Ascending aorta (tissue), 2 donors: ENCODE measurements at regions of chr4 and their contacts with region 1.

Region 1: GRCh38 chr4:161680146-161680545 is 483.7 kb downstream of the FSTL5 start:
- DNase-seq: no peak
- H3K4me3 ChIP-seq: no peak overlapping the region
- H3K27ac ChIP-seq: no peak overlapping the region
- H3K4me1 ChIP-seq: no peaks in the 10 kb centered on the region
- H3K27me3 ChIP-seq: no peaks in the 10 kb centered on the region
- CTCF ChIP-seq: no peak

Region 2: DNA sequence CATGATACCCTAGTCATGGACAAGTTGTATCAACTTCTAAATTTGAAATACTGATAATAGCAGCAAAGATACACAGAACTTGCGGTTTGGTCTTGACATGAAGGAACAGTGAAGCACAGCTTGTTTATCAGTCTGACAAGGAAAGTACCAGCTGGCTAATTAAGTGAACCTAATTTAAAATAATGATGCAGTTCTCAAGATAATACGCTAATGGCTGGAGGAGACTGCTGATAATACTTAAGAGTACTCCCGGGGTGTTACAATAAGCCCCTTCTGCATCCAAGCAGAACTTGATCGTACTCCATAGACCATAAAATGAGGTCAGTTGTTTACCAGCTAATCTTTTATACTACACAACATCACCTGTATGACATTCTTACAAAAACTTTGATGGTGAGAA is 213.8 kb before region 1 on chr4:
- intact Hi-C with region 1: no loop called
- DNase-seq: no peak
- H3K4me3 ChIP-seq: no peak overlapping the region
- H3K27ac ChIP-seq: no peak overlapping the region
- H3K4me1 ChIP-seq: no peaks in the 10 kb centered on the region
- H3K27me3 ChIP-seq: no peaks in the 10 kb centered on the region
- CTCF ChIP-seq: no peak

Region 3: GRCh38 chr4:161664740-161665139 is 15.4 kb before region 1 on chr4:
- intact Hi-C with region 1: loop called (anchors 1 kb)
- DNase-seq: no peak
- H3K4me3 ChIP-seq: no peak overlapping the region
- H3K27ac ChIP-seq: no peak overlapping the region
- H3K4me1 ChIP-seq: no peaks in the 10 kb centered on the region
- H3K27me3 ChIP-seq: no peaks in the 10 kb centered on the region
- CTCF ChIP-seq: no peak